ENCODE measurements at regions of chr3 and their contacts with region 1.

Region 1: GRCh38 chr3:33131331-33132018 is 17.7 kb downstream of the CRTAP start:
- DNase-seq: peak; percentile 32
- H3K4me3 Mint-ChIP-seq: no peak overlapping the region
- H3K27ac Mint-ChIP-seq: no peak overlapping the region
- H3K4me1 Mint-ChIP-seq: peaks cover 9% of the 10 kb centered on the region
- H3K27me3 Mint-ChIP-seq: no peaks in the 10 kb centered on the region

Region 2: GRCh38 chr3:31918179-31919168 is 1213.0 kb before region 1 on chr3:
- CTCF ChIA-PET with region 1: no interaction called
- POLR2A ChIA-PET with region 1: no interaction called
- intact Hi-C with region 1: no loop called
- DNase-seq: no peak
- H3K4me3 Mint-ChIP-seq: no peak overlapping the region
- H3K27ac Mint-ChIP-seq: peak overlapping the region; percentile 47
- H3K4me1 Mint-ChIP-seq: peaks cover 23% of the 10 kb centered on the region
- H3K27me3 Mint-ChIP-seq: no peaks in the 10 kb centered on the region

Region 3: GRCh38 chr3:33081812-33082211 is 49.7 kb before region 1 on chr3:
- CTCF ChIA-PET with region 1: no interaction called
- POLR2A ChIA-PET with region 1: no interaction called
- intact Hi-C with region 1: no loop called
- DNase-seq: no peak
- H3K4me3 Mint-ChIP-seq: no peak overlapping the region
- H3K27ac Mint-ChIP-seq: no peak overlapping the region
- H3K4me1 Mint-ChIP-seq: peaks cover 30% of the 10 kb centered on the region
- H3K27me3 Mint-ChIP-seq: no peaks in the 10 kb centered on the region

Region 4: DNA sequence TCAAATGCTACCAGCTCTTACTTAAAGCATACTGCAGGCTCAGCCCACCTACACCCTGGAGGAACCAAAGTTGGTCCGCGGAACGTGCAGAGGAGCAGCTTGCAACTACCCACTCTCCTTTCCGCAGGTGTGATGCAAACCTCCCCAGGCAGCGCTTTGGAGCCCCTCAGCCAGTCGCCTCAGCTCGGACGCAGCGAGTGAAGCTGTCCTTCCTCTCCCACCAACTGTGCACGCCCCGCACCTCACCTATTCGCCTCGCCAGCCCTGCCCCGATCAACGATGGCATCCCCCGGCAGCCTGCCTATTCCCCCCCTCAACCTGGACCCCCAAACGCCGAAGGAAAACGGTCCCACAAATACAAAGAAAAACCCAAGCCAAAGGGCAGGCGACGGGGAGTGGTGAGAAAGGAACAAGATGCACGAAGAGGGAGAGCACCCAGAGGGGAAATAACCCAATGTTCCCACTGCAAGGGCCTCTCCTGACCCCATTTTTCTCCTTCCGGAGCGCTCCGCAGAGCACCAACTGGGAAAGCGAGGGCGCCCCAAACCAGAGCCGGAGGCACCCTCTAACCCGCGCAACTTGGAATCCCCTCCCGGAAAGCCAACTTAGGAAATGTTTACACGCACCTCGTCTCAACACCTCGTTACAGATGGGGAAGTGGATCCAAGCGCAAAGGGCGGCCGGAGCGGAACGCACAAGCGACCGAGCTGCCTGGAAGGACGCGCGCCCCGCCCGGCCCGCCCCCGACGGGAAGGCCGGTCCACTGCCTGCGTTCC is 35.2 kb before region 1 on chr3:
- CTCF ChIA-PET with region 1: interaction called, 13 read pairs
- POLR2A ChIA-PET with region 1: no interaction called
- intact Hi-C with region 1: no loop called
- DNase-seq: peak; percentile 60
- H3K4me3 Mint-ChIP-seq: peak overlapping the region; percentile 97
- H3K27ac Mint-ChIP-seq: peak overlapping the region; percentile 85
- H3K4me1 Mint-ChIP-seq: peaks cover 43% of the 10 kb centered on the region
- H3K27me3 Mint-ChIP-seq: no peaks in the 10 kb centered on the region

Region 5: GRCh38 chr3:33144433-33144832 is 13.0 kb after region 1 on chr3:
- CTCF ChIA-PET with region 1: interaction called, 25 read pairs
- POLR2A ChIA-PET with region 1: no interaction called
- intact Hi-C with region 1: no loop called
- DNase-seq: peak; percentile 55
- H3K4me3 Mint-ChIP-seq: no peak overlapping the region
- H3K27ac Mint-ChIP-seq: no peak overlapping the region
- H3K4me1 Mint-ChIP-seq: no peaks in the 10 kb centered on the region
- H3K27me3 Mint-ChIP-seq: no peaks in the 10 kb centered on the region

Region 6: DNA sequence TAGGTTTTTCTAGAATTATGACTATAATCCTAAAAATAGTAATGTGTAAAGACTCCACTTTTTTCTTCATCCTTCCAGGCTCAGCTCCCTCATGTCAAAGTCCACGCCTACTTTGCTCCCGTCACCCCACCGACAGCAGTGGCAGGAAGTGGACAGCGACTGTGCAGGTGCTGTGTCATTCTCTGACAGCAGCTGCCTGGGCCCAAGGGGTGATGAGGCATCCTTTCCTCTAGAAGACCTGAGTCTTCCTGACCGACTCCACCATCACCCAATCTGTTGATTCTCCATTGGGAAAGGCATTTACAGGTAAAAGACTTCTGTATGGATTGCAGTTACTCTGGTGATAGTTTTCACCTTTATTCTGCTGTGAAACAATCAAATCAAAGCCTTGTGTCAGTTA is 253.9 kb after region 1 on chr3:
- CTCF ChIA-PET with region 1: interaction called, 12 read pairs
- POLR2A ChIA-PET with region 1: no interaction called
- intact Hi-C with region 1: no loop called
- DNase-seq: peak; percentile 78
- H3K4me3 Mint-ChIP-seq: no peak overlapping the region
- H3K27ac Mint-ChIP-seq: peak overlapping the region; percentile 59
- H3K4me1 Mint-ChIP-seq: peaks cover 12% of the 10 kb centered on the region
- H3K27me3 Mint-ChIP-seq: no peaks in the 10 kb centered on the region

Measured in activated CD4-positive, alpha-beta memory T cell treated with anti-CD3 and anti-CD28 coated beads for 36 hours (primary cell).